Activated CD4-positive, alpha-beta T cell treated with anti-CD3 and anti-CD28 coated beads for 36 hours (primary cell): ENCODE measurements at regions of chr1 and their contacts with region 1.

Region 1: GRCh38 chr1:86913896-86914634 is at the start of gene SELENOF:
- DNase-seq: peak; percentile 99
- ATAC-seq: peak; percentile 94
- H3K4me3 Mint-ChIP-seq: no peak within 1 kb of the TSS
- H3K27ac Mint-ChIP-seq: no peak within 1 kb of the TSS
- H3K4me1 Mint-ChIP-seq: peaks cover 39% of the 10 kb centered on the region
- H3K27me3 Mint-ChIP-seq: no peaks in the 10 kb centered on the region
- total RNA-seq, gene SELENOF: 140 to 141 TPM

Region 2: GRCh38 chr1:86395771-86396497 is 518.1 kb before region 1 on chr1 and contains the start of gene ODF2L:
- CTCF ChIA-PET with region 1: no interaction called
- POLR2A ChIA-PET with region 1: interaction called, 3 read pairs
- intact Hi-C with region 1: loop called in 1 of 2 experiments (anchors 1 kb)
- DNase-seq: peak; percentile 94
- ATAC-seq: peak; percentile 100
- H3K4me3 Mint-ChIP-seq: peak within 1 kb of the TSS; percentile 89
- H3K27ac Mint-ChIP-seq: peak within 1 kb of the TSS; percentile 88
- H3K4me1 Mint-ChIP-seq: peaks cover 41% of the 10 kb centered on the region
- H3K27me3 Mint-ChIP-seq: no peaks in the 10 kb centered on the region
- total RNA-seq, gene ODF2L: 18.8 to 27.3 TPM

Region 3: GRCh38 chr1:86875722-86876121 is 38.3 kb before region 1 on chr1:
- CTCF ChIA-PET with region 1: no interaction called
- POLR2A ChIA-PET with region 1: no interaction called
- intact Hi-C with region 1: no loop called
- DNase-seq: no peak
- ATAC-seq: no peak
- H3K4me3 Mint-ChIP-seq: no peak overlapping the region
- H3K27ac Mint-ChIP-seq: no peak overlapping the region
- H3K4me1 Mint-ChIP-seq: no peaks in the 10 kb centered on the region
- H3K27me3 Mint-ChIP-seq: no peaks in the 10 kb centered on the region

Region 4: GRCh38 chr1:86965012-86965826 is 51.2 kb after region 1 on chr1:
- CTCF ChIA-PET with region 1: no interaction called
- POLR2A ChIA-PET with region 1: no interaction called
- intact Hi-C with region 1: loop called in 1 of 2 experiments (anchors 5 kb)
- DNase-seq: peak; percentile 28
- ATAC-seq: peak; percentile 36
- H3K4me3 Mint-ChIP-seq: no peak overlapping the region
- H3K27ac Mint-ChIP-seq: no peak overlapping the region
- H3K4me1 Mint-ChIP-seq: no peaks in the 10 kb centered on the region
- H3K27me3 Mint-ChIP-seq: no peaks in the 10 kb centered on the region

Region 5: GRCh38 chr1:87024936-87025540 is 111.0 kb after region 1 on chr1:
- CTCF ChIA-PET with region 1: no interaction called
- POLR2A ChIA-PET with region 1: no interaction called
- intact Hi-C with region 1: no loop called
- DNase-seq: no peak
- ATAC-seq: peak; percentile 47
- H3K4me3 Mint-ChIP-seq: no peak overlapping the region
- H3K27ac Mint-ChIP-seq: no peak overlapping the region
- H3K4me1 Mint-ChIP-seq: peaks cover 12% of the 10 kb centered on the region
- H3K27me3 Mint-ChIP-seq: no peaks in the 10 kb centered on the region

Region 6: GRCh38 chr1:87077959-87078639 is 164.0 kb after region 1 on chr1:
- CTCF ChIA-PET with region 1: interaction called, 21 read pairs
- POLR2A ChIA-PET with region 1: interaction called, 3 read pairs
- intact Hi-C with region 1: loop called in 1 of 2 experiments (anchors 2 kb)
- DNase-seq: peak; percentile 15
- ATAC-seq: peak; percentile 97
- H3K4me3 Mint-ChIP-seq: no peak overlapping the region
- H3K27ac Mint-ChIP-seq: peak overlapping the region; percentile 71
- H3K4me1 Mint-ChIP-seq: peaks cover 23% of the 10 kb centered on the region
- H3K27me3 Mint-ChIP-seq: no peaks in the 10 kb centered on the region

Region 7: DNA sequence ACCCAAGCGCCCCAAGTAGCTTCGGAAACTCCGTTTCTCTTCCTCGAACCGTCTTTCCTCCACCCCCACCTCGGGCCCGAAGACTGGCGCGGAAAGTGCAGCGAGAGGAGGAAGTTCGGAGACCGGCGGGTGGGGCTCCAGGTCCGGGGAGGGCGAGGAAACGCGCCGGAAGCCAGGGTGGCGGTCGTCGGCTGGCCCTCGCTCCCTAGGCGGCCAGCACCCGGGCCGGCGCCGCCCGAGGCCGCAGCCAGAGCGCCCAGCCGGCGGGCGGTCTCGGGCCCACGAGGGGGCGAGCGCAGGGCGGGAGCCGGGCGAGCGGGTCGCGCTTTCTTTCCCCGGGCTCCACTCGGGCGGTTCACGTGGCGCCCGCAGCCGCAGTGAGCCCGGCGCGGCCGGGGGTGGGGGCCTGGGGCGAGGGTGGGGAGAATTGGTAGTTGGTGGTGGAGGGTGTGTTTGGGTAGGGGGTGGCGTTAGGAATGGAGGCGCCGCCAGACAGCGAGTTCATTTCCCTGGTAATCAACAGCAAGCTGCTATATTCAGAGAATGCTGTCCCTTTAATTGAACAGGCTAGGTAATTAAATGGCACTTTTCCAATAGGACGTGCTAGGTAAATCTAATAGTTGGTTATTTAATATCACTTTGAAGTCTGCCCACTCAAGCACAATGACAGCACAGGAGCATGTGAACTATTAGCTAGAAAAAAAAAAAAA is 421.3 kb after region 1 on chr1:
- CTCF ChIA-PET with region 1: no interaction called
- POLR2A ChIA-PET with region 1: interaction called, 4 read pairs
- intact Hi-C with region 1: loop called (anchors 2 to 5 kb)
- DNase-seq: peak; percentile 77
- ATAC-seq: peak; percentile 53
- H3K4me3 Mint-ChIP-seq: peak overlapping the region; percentile 76
- H3K27ac Mint-ChIP-seq: peak overlapping the region; percentile 96
- H3K4me1 Mint-ChIP-seq: peaks cover 60% of the 10 kb centered on the region
- H3K27me3 Mint-ChIP-seq: peaks cover 29% of the 10 kb centered on the region